IMR-90 (cell line): ENCODE measurements at regions of chr18 and their contacts with region 1.

Region 1: GRCh38 chr18:59484837-59485328 is 125.8 kb upstream of the LMAN1 start:
- DNase-seq: peak; percentile 96
- ATAC-seq: peak; percentile 87
- H3K4me3 ChIP-seq: no peak overlapping the region
- H3K27ac ChIP-seq: no peak overlapping the region
- H3K4me1 ChIP-seq: peaks cover 8% of the 10 kb centered on the region
- H3K27me3 ChIP-seq: no peaks in the 10 kb centered on the region
- CTCF ChIP-seq: no peak
- POLR2A ChIP-seq: no peak
- RAD21 ChIP-seq: no peak

Region 2: DNA sequence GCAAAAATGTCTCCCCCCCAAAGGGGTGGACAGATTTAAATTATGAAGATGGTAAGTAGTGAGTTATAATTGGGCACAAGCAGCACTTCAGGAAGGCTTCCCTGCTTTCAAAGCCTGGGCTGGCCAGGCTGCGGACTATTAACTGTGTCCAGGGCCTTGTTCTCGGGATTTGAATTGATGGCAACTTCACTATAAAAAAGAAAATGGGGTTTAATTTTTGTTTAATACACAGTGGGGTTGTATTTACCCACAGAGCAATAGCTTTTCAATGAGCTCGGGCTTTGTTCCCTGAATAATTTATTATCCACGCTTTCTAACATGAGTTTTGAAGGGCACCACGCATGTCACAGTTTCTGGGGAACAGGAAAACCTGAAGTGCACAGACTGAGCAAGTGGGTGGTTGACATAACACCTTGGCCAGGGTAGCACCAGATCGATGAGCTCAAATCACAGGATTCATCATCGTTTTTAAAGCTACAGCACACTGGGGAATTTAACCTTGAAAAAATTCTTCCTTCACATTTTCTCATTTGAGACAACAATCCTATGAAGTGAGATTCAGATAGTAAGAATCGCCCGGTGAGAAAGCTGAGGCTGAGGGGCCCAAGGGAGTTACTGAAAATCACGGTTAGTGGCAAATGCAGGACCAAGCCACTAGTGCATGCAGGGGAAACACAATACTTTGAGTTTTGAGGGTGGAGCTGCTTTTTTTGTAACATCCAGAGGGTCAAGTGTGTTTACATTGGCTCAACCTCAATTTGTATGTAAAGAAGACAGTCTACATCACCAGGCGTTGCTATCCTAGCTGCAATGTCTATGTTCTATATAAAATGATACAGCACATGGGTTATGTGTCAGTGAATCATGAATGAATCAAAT is 97.0 kb before region 1 on chr18:
- CTCF ChIA-PET with region 1: no interaction called
- POLR2A ChIA-PET with region 1: no interaction called
- dilution Hi-C with region 1: no loop called
- in situ Hi-C with region 1: no loop called
- intact Hi-C with region 1: no loop called
- DNase-seq: no peak
- ATAC-seq: no peak
- H3K4me3 ChIP-seq: no peak overlapping the region
- H3K27ac ChIP-seq: no peak overlapping the region
- H3K4me1 ChIP-seq: no peaks in the 10 kb centered on the region; the same call in 1 of the 2 replicates
- H3K27me3 ChIP-seq: peaks cover 6% of the 10 kb centered on the region; the same call in 1 of the 2 replicates
- CTCF ChIP-seq: no peak
- POLR2A ChIP-seq: no peak
- RAD21 ChIP-seq: no peak

Region 3: DNA sequence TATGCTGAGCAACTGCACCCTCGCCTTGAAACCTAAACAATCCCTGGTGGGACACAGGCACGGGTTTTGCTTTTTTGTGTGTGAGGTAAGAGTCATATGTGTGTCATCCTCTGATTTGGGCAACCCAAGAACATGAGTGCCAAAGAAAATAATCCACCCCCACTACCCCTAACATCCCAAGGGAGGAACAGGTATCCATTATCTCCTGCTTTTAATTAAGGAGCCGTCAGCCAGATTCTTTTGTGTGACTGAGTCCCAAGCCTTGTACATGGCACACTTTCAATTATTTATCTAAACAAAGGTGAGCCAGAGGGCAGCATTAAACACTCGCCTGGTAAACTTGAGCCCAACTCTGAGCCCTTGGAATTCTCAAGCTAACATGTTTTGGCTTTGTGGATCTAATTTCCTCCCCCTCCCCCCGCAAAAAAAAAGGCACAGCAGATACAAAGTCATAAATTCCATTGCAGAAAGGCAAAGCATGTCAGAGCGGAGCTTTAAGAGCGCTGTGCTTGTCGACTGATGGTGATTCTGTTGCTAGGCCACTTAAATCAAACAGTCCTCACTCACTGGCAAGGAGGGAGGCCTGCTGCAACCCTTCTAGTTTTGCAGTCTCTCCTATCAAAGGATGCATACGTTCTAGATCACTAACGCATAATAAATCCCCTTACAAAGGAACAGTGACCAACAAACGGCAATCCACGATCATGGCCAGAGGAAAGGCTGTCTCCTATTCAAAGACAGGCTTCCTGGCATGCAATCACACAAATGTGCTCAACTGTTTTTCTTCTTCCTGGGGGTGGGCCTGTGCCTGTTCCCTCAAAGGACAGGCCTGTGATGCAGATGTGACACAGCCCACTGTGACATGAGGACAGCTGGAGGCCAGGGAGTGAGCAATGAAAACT is 17.6 kb after region 1 on chr18:
- CTCF ChIA-PET with region 1: no interaction called
- POLR2A ChIA-PET with region 1: no interaction called
- dilution Hi-C with region 1: no loop called
- in situ Hi-C with region 1: no loop called
- intact Hi-C with region 1: loop called (anchors 2 kb)
- DNase-seq: peak; percentile 94
- ATAC-seq: peak; percentile 84
- H3K4me3 ChIP-seq: no peak overlapping the region
- H3K27ac ChIP-seq: peak overlapping the region; percentile 94
- H3K4me1 ChIP-seq: peaks cover 28% of the 10 kb centered on the region
- H3K27me3 ChIP-seq: no peaks in the 10 kb centered on the region
- CTCF ChIP-seq: no peak
- POLR2A ChIP-seq: no peak
- RAD21 ChIP-seq: no peak

Region 4: GRCh38 chr18:59606193-59607077 is 121.6 kb after region 1 on chr18:
- CTCF ChIA-PET with region 1: no interaction called
- POLR2A ChIA-PET with region 1: no interaction called
- dilution Hi-C with region 1: no loop called
- in situ Hi-C with region 1: no loop called
- intact Hi-C with region 1: loop called (anchors 10 kb)
- DNase-seq: peak; percentile 89
- ATAC-seq: peak; percentile 81
- H3K4me3 ChIP-seq: no peak overlapping the region
- H3K27ac ChIP-seq: peak overlapping the region; percentile 94; the same call in 1 of the 2 replicates
- H3K4me1 ChIP-seq: peaks cover 23% of the 10 kb centered on the region
- H3K27me3 ChIP-seq: no peaks in the 10 kb centered on the region
- CTCF ChIP-seq: no peak
- POLR2A ChIP-seq: no peak
- RAD21 ChIP-seq: no peak